ENCODE measurements at regions of chr7 and their contacts with region 1.

Region 1: DNA sequence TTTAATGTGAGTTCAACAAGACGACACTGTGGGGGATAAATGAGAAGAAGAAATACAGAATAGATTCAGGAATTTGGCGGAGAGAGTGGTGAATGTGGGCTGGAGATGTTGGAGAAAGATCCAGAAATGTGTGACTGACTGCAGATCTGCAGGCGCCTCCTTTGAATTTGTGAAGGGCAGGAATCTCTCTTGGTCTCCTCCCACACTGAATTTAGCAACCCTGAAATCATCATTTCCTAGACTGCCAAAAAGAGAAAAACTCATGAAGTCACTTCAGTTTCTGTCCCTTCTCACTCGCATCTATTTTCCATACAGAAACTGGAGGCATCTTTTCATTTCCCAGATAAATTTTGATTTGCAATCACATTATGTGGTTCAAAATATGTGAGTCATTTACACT is 128.7 kb downstream of the GNAI1 start:
- DNase-seq: no peak
- ATAC-seq: peak in 4 of 8 donors; percentile 17 to 42 (median 31)
- H3K4me3 ChIP-seq: peak overlapping the region in 1 of 10 donors; percentile 14
- H3K27ac ChIP-seq: no peak overlapping the region
- H3K4me1 ChIP-seq: no peaks in the 10 kb centered on the region
- H3K27me3 ChIP-seq: no peaks in the 10 kb centered on the region
- CTCF ChIP-seq: no peak

Region 2: GRCh38 chr7:80206763-80207162 is 56.6 kb before region 1 on chr7:
- intact Hi-C with region 1: loop called in 1 of 10 experiments (anchors 10 kb)
- DNase-seq: no peak
- ATAC-seq: no peak
- H3K4me3 ChIP-seq: no peak overlapping the region
- H3K27ac ChIP-seq: no peak overlapping the region
- H3K4me1 ChIP-seq: peaks cover 0 to 3% (median 0%) of the 10 kb centered on the region in 9 donors
- H3K27me3 ChIP-seq: no peaks in the 10 kb centered on the region
- CTCF ChIP-seq: peak in 1 of 9 donors; percentile 30

Region 3: DNA sequence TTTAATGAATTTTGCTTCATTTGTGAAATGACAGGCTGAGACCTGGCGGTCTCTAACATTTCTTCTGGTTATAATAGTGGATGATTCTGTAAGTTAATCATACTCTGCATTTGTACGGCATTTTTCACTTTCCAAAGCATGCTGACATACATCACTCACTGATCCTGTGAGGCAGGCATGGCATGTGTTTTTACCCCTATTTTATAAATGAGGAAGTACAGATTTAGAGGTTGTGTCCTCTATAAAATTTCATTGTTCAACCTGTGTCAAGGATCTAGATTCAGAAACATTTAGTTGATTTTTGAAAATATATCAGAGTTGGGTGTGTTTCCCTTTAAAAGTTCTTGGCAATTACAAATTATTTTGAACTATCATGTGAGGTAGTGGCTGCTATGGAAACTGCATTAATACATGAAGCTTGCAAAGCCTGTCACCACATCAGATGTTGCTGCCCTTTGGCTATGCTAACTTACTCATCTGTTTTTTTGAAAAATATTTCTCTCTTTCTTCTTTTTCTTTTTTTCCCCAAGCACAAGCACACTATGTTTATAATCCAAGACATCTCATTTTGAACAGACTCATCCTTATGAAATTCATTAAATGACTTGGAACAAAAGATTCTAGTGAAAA is 44.0 kb after region 1 on chr7:
- intact Hi-C with region 1: no loop called
- DNase-seq: no peak
- ATAC-seq: no peak
- H3K4me3 ChIP-seq: no peak overlapping the region
- H3K27ac ChIP-seq: no peak overlapping the region
- H3K4me1 ChIP-seq: peaks cover 0 to 24% (median 10%) of the 10 kb centered on the region in 9 donors
- H3K27me3 ChIP-seq: no peaks in the 10 kb centered on the region
- CTCF ChIP-seq: no peak

Region 4: GRCh38 chr7:80900583-80901576 is 637.5 kb after region 1 on chr7:
- intact Hi-C with region 1: no loop called
- DNase-seq: no peak
- ATAC-seq: peak in 5 of 8 donors; percentile 33 to 67 (median 45)
- H3K4me3 ChIP-seq: no peak overlapping the region
- H3K27ac ChIP-seq: peak overlapping the region in 2 of 10 donors; percentile 1
- H3K4me1 ChIP-seq: peaks cover 0 to 16% (median 0%) of the 10 kb centered on the region in 9 donors
- H3K27me3 ChIP-seq: no peaks in the 10 kb centered on the region
- CTCF ChIP-seq: no peak

Measured in heart right ventricle (tissue), 16 donors.